ENCODE measurements at regions of chr7 and their contacts with region 1.

Region 1: GRCh38 chr7:138825049-138825721 is 27.2 kb upstream of the ATP6V0A4 start:
- DNase-seq: no peak
- H3K4me3 Mint-ChIP-seq: no peak overlapping the region
- H3K27ac Mint-ChIP-seq: no peak overlapping the region
- H3K4me1 Mint-ChIP-seq: peaks cover 21% of the 10 kb centered on the region
- H3K27me3 Mint-ChIP-seq: no peaks in the 10 kb centered on the region
- CTCF ChIP-seq: no peak

Region 2: DNA sequence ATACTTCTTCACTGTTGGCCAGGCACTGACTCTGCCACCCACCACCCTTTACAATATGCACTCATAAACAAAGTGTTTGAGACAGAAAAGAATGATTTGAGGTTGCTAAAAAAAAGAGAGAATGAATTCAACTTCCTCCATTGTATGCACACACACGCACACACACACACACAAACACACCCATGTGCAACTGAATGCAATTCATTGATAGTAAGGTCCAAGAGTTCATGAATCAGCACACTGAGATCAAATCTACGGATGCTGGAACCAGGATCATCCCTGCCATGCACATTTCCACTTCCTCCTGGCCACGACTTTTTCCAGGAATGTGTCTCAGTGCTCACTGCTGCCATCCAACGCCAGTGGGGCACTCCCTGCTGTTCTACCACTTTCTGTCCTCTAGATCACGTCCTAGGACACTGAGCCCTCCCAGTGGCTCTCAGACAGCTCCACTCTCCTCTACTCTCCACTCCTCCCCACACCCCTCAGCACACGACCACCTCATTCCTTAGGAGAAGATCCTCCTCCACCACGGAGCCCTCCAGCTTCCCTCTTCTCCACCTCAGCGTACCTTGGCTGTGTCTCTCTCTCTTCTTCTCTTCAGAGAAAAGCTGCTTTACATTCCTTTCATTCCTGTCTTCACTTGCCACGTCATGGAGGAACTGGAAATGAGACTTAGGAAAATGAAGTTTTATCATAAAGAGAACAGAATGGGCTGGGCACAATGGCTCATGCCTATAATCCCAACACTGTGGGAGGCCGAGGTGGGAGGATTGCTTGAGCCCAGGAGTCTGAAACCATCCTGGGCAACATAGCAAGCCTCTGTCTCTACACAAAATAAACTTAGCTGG is 39.4 kb before region 1 on chr7:
- CTCF ChIA-PET with region 1: no interaction called
- intact Hi-C with region 1: loop called (anchors 1 kb)
- DNase-seq: peak; percentile 45
- H3K4me3 Mint-ChIP-seq: peak overlapping the region; percentile 56
- H3K27ac Mint-ChIP-seq: peak overlapping the region; percentile 93
- H3K4me1 Mint-ChIP-seq: peaks cover 17% of the 10 kb centered on the region
- H3K27me3 Mint-ChIP-seq: no peaks in the 10 kb centered on the region
- CTCF ChIP-seq: no peak

Region 3: DNA sequence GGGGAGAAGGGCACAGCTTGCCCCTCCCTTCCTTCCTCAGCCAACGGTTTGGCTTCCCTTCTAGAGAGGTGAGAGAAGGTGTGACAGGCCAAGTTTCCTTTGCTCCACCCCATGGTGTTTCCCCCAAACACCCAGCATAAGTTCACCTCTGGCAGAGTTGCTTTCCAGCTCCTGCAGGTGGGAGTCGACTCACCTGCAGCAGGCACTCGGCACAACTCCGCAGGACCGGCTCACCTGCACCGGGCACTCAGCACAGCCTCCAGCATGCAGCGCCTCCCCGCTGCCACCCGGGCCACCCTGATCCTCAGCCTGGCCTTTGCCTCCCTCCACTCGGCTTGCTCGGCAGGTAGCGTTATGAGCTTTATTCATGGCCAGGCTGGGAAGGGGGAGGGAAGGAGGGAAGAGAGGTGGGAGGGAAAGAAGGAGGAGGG is 27.3 kb before region 1 on chr7 and contains the starts of genes ATP6V0A4 and TMEM213:
- CTCF ChIA-PET with region 1: interaction called, 5 read pairs
- intact Hi-C with region 1: loop called (anchors 1 kb)
- DNase-seq: peak; percentile 72
- H3K4me3 Mint-ChIP-seq: peak within 1 kb of the TSS; percentile 65
- H3K27ac Mint-ChIP-seq: peak within 1 kb of the TSS; percentile 49
- H3K4me1 Mint-ChIP-seq: peaks cover 51% of the 10 kb centered on the region
- H3K27me3 Mint-ChIP-seq: no peaks in the 10 kb centered on the region
- CTCF ChIP-seq: no peak
- total RNA-seq, gene ATP6V0A4: 5.6 and 7.7 TPM in 2 replicates
- total RNA-seq, gene TMEM213: 9.8 and 11.3 TPM in 2 replicates

Measured in Calu3 (cell line).